Posterior vena cava (tissue), 2 donors: ENCODE measurements at regions of chr12 and their contacts with region 1.

Region 1: DNA sequence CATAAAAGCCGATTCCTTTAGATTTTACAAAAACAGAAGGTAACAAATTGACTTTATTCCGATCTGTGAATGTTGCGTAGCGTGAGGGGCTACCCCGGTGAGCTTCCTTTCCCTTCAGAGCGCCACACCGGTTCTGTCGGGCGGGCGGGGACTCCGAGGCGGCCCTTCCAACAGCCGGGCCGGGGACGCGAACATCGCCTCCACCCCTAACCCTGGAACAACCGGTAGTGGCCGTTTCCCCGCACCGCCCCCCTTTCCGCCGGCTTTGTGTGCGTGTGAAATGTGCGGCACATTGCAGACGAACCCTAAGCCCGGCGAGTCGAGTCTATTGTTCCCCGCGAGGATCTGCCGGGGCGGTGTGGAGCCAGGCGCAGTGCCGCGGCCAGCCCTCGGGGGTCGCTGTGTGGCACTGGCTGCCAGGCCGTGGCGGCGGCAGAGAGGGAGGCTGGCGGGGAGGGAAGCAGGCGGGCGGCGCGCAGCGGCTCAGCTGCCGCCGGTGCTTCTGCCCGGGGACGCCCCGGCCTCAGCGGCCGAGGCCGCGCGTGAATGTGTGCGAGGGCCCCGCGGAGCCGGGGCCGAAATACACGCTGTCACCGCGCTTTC is 775 bp upstream of the ARID2 start:
- DNase-seq: peak; percentile 99

Region 2: DNA sequence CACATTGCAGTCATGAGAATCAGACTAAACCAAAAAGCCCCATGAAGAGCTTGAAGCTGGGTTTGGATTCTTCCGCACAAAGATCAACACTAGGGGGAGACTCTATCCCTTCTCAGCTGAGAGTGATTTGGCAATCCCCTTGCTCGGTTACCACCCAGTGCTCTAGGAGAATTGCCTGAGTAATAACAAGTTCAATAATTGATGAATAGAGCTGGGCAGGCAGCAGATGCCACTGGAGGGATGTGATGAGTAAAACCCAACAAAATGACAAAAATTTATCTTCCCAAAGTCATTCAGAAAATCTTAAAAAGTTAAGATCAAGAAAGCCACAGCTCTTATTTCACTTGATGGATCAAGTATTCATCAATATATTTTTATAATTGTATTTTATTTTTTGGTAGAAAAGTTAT is 184.8 kb before region 1 on chr12:
- intact Hi-C with region 1: loop called in 1 of 2 experiments (anchors 10 kb)
- DNase-seq: no peak